Testis (tissue), 5 donors: ENCODE measurements at regions of chr15 and their contacts with region 1.

Region 1: DNA sequence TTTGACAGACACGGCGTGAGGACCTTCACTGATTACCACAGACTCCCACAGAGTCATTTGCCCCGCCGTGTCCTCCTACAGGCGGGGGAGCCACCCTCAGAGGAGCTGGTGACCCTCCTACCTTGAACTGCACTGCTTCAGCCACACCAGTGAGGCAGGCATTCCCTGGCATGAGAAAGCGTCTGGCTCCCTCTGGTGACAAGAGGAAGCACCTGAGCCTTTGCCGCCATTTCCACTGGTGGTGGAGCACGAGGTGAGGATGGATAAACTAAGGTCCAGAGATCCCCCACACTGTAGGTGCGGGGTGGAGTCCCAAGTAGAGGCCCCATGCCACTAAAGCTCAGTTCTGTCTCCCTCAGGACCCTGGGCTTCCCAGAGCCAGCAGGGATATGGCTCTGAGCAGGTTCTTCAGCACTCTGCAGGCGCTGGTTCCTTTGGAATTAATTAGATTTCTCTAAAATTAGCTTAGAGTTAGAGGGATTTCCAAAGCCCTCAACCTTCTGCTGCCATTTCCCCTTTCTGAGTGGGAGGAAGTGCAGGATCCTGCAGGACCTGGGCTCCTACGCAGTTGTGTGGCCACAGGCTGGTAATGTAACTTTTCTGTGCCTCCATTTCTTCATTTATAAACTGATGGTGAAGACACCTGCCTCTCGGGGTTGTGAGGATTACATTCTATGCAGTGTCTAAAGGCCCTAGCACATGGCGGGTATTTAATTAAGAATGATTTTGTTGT is 224.0 kb downstream of the SLCO3A1 start:
- DNase-seq: peak; percentile 89
- H3K4me3 ChIP-seq: no peak overlapping the region
- H3K27ac ChIP-seq: no peak overlapping the region
- H3K4me1 ChIP-seq: peaks cover 14% of the 10 kb centered on the region
- H3K27me3 ChIP-seq: no peaks in the 10 kb centered on the region
- CTCF ChIP-seq: peak; percentile 61 to 76 (median 66)
- POLR2A ChIP-seq: no peak

Region 2: GRCh38 chr15:91302588-91303439 is 774.7 kb before region 1 on chr15:
- intact Hi-C with region 1: loop called (anchors 5 kb)
- DNase-seq: peak; percentile 36
- H3K4me3 ChIP-seq: no peak overlapping the region
- H3K27ac ChIP-seq: no peak overlapping the region
- H3K4me1 ChIP-seq: no peaks in the 10 kb centered on the region
- H3K27me3 ChIP-seq: no peaks in the 10 kb centered on the region
- CTCF ChIP-seq: peak; percentile 47 to 65 (median 50)
- POLR2A ChIP-seq: no peak

Region 3: GRCh38 chr15:91782221-91782620 is 295.3 kb before region 1 on chr15:
- intact Hi-C with region 1: no loop called
- DNase-seq: no peak
- H3K4me3 ChIP-seq: no peak overlapping the region
- H3K27ac ChIP-seq: no peak overlapping the region
- H3K4me1 ChIP-seq: no peaks in the 10 kb centered on the region
- H3K27me3 ChIP-seq: no peaks in the 10 kb centered on the region
- CTCF ChIP-seq: no peak
- POLR2A ChIP-seq: no peak

Region 4: GRCh38 chr15:91852741-91853510 is 224.6 kb before region 1 on chr15:
- intact Hi-C with region 1: loop called (anchors 10 kb)
- DNase-seq: peak; percentile 78
- H3K4me3 ChIP-seq: peak overlapping the region; percentile 67 to 86
- H3K27ac ChIP-seq: peak overlapping the region; percentile 90 to 95
- H3K4me1 ChIP-seq: peaks cover 20% of the 10 kb centered on the region
- H3K27me3 ChIP-seq: no peaks in the 10 kb centered on the region
- CTCF ChIP-seq: peak; percentile 82 to 84 (median 83)
- POLR2A ChIP-seq: no peak